ENCODE measurements at regions of chr20 and their contacts with region 1.

Region 1: GRCh38 chr20:23350196-23350903 is at the start of gene NXT1:
- DNase-seq: peak; percentile 96 to 98
- H3K4me3 ChIP-seq: peak within 1 kb of the TSS; percentile 91
- H3K27ac ChIP-seq: peak within 1 kb of the TSS; percentile 98
- H3K4me1 ChIP-seq: peaks cover 25% of the 10 kb centered on the region
- H3K27me3 ChIP-seq: no peaks in the 10 kb centered on the region
- CTCF ChIP-seq: no peak
- total RNA-seq, gene NXT1: 29.8 and 30.9 TPM in 2 replicates

Region 2: GRCh38 chr20:22385602-22386305 is 964.6 kb before region 1 on chr20:
- CTCF ChIA-PET with region 1: no interaction called
- POLR2A ChIA-PET with region 1: no interaction called
- intact Hi-C with region 1: loop called (anchors 2 kb)
- DNase-seq: peak in 1 of 2 experiments; percentile 7
- H3K4me3 ChIP-seq: no peak overlapping the region
- H3K27ac ChIP-seq: no peak overlapping the region
- H3K4me1 ChIP-seq: peaks cover 46% of the 10 kb centered on the region
- H3K27me3 ChIP-seq: no peaks in the 10 kb centered on the region
- CTCF ChIP-seq: peak; percentile 28; the same call in 1 of the 2 replicates

Region 3: DNA sequence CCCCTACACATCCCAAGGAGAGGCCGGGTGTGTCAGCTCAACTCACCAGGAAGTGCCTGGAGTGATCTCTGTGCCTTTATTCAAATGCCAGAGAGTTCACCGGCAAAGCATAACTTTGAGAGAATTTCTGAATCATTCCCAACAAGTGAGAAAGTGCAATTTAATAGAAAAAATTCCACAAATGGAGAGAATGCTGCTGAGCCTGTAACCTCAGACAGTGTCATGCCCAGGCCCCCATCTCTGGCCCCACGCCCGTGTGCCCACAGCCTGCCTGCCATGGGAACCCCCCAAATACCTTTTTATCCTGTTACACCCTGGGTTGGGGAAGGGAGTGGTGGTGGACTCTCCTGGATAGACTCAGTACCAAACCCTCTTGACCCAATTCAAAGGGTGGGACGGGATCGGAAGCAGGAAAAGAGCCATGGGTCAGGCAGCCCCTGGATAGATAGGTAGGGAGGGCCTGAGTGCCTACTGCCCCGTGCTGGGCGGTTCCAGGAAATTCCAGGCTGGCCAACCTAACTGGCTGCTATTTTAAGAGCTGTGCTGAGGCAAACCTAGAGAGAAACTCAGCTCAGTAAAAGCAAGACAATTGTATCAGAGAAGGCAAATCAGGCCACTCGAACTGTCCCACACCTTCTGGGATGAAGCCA is 587.0 kb before region 1 on chr20:
- CTCF ChIA-PET with region 1: no interaction called
- POLR2A ChIA-PET with region 1: interaction called, 3 read pairs
- intact Hi-C with region 1: loop called (anchors 10 kb)
- DNase-seq: peak; percentile 90 to 92
- H3K4me3 ChIP-seq: peak overlapping the region; percentile 29; the same call in 1 of the 2 replicates
- H3K27ac ChIP-seq: peak overlapping the region; percentile 98
- H3K4me1 ChIP-seq: peaks cover 46% of the 10 kb centered on the region
- H3K27me3 ChIP-seq: no peaks in the 10 kb centered on the region
- CTCF ChIP-seq: no peak

Region 4: GRCh38 chr20:23147964-23148730 is 202.2 kb before region 1 on chr20:
- CTCF ChIA-PET with region 1: no interaction called
- POLR2A ChIA-PET with region 1: interaction called, 5 read pairs
- intact Hi-C with region 1: loop called (anchors 10 kb)
- DNase-seq: peak; percentile 60 to 96
- H3K4me3 ChIP-seq: peak overlapping the region; percentile 36; the same call in 1 of the 2 replicates
- H3K27ac ChIP-seq: peak overlapping the region; percentile 97
- H3K4me1 ChIP-seq: peaks cover 97% of the 10 kb centered on the region
- H3K27me3 ChIP-seq: no peaks in the 10 kb centered on the region
- CTCF ChIP-seq: no peak

Region 5: GRCh38 chr20:23596579-23597250 is 246.4 kb after region 1 on chr20:
- CTCF ChIA-PET with region 1: interaction called, 13 read pairs
- POLR2A ChIA-PET with region 1: no interaction called
- intact Hi-C with region 1: no loop called
- DNase-seq: peak in 1 of 2 experiments; percentile 36
- H3K4me3 ChIP-seq: no peak overlapping the region
- H3K27ac ChIP-seq: no peak overlapping the region
- H3K4me1 ChIP-seq: no peaks in the 10 kb centered on the region
- H3K27me3 ChIP-seq: peaks cover 5% of the 10 kb centered on the region; the same call in 1 of the 2 replicates
- CTCF ChIP-seq: no peak

Region 6: GRCh38 chr20:23794841-23795240 is 444.5 kb after region 1 on chr20:
- CTCF ChIA-PET with region 1: no interaction called
- POLR2A ChIA-PET with region 1: no interaction called
- intact Hi-C with region 1: no loop called
- DNase-seq: peak in 1 of 2 experiments; percentile 43
- H3K4me3 ChIP-seq: no peak overlapping the region
- H3K27ac ChIP-seq: peak overlapping the region; percentile 86
- H3K4me1 ChIP-seq: peaks cover 28% of the 10 kb centered on the region
- H3K27me3 ChIP-seq: no peaks in the 10 kb centered on the region
- CTCF ChIP-seq: no peak